ENCODE measurements at regions of chr19 and their contacts with region 1.

Region 1: GRCh38 chr19:11738746-11739620 is at the start of gene ZNF823:
- DNase-seq: peak; percentile 99
- ATAC-seq: peak; percentile 100
- H3K4me3 Mint-ChIP-seq: peak within 1 kb of the TSS; percentile 99
- H3K27ac Mint-ChIP-seq: peak within 1 kb of the TSS; percentile 92
- H3K4me1 Mint-ChIP-seq: peaks cover 16% of the 10 kb centered on the region
- H3K27me3 Mint-ChIP-seq: no peaks in the 10 kb centered on the region
- total RNA-seq, gene ZNF823: 2.9 to 3.0 TPM

Region 2: DNA sequence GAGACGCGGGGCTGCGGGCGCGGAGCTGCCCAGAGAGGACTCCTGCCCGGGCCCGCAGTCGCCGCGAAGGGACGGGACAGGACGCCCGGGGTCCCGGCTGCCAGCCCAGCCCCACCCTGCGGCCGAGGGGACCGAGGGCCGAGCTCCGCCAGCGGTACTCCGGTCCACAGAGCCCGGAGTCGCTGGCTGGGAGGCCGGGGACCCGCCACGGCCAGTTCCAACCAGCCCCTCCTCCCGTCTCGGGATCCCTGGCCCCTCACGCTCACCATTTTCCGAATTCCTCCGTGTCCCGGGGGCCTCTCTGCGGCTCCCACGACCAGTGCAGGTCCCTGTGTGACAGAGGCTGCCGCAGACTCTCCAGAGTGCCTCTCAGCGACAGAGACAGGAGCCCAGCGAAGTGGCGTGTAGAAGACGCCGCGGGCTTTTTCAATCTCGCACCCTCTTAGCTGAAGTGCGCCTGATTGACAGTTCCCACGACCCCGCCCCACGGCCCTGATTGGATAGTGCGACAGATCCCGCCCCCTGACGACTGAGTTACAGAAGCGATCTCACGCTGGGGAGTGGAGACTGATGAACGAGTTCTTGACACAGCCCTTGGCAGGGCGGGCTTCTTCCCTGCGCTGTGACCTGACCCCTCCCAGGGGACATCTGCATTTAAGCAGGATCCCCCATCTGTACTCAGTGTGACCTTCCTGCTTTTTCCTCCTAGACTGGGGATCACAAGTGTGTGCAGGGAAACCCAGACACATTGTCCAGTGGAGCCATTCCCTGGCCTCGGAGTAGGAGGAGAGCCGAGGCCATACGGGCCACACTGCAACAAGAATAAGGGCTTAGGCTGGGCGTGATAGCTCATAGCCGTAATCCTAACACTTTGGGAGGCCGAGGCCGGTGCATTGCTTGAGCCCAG is 44.2 kb before region 1 on chr19:
- CTCF ChIA-PET with region 1: interaction called, 6 read pairs
- POLR2A ChIA-PET with region 1: no interaction called
- intact Hi-C with region 1: loop called (anchors 2 kb)
- DNase-seq: peak; percentile 96
- ATAC-seq: peak; percentile 99
- H3K4me3 Mint-ChIP-seq: peak overlapping the region; percentile 84
- H3K27ac Mint-ChIP-seq: peak overlapping the region; percentile 84
- H3K4me1 Mint-ChIP-seq: peaks cover 10% of the 10 kb centered on the region
- H3K27me3 Mint-ChIP-seq: peaks cover 28% of the 10 kb centered on the region

Region 3: GRCh38 chr19:11766597-11767591 is 27.9 kb after region 1 on chr19 and contains the start of gene ZNF441:
- CTCF ChIA-PET with region 1: no interaction called
- POLR2A ChIA-PET with region 1: interaction called, 5 read pairs
- intact Hi-C with region 1: loop called in 1 of 2 experiments (anchors 1 kb)
- DNase-seq: peak; percentile 98
- ATAC-seq: peak; percentile 99
- H3K4me3 Mint-ChIP-seq: peak within 1 kb of the TSS; percentile 88
- H3K27ac Mint-ChIP-seq: peak within 1 kb of the TSS; percentile 95
- H3K4me1 Mint-ChIP-seq: peaks cover 13% of the 10 kb centered on the region
- H3K27me3 Mint-ChIP-seq: peaks cover 12% of the 10 kb centered on the region
- total RNA-seq, gene ZNF441: 4.3 to 5.0 TPM

Region 4: GRCh38 chr19:11848594-11849469 is 109.8 kb after region 1 on chr19 and contains the start of gene ZNF439:
- CTCF ChIA-PET with region 1: no interaction called
- POLR2A ChIA-PET with region 1: no interaction called
- intact Hi-C with region 1: loop called in 1 of 2 experiments (anchors 1 kb)
- DNase-seq: peak; percentile 96
- ATAC-seq: peak; percentile 100
- H3K4me3 Mint-ChIP-seq: peak within 1 kb of the TSS; percentile 80
- H3K27ac Mint-ChIP-seq: peak within 1 kb of the TSS; percentile 85
- H3K4me1 Mint-ChIP-seq: peaks cover 23% of the 10 kb centered on the region
- H3K27me3 Mint-ChIP-seq: no peaks in the 10 kb centered on the region
- total RNA-seq, gene ZNF439: 10.4 to 11.4 TPM